ENCODE measurements at regions of chr19 and their contacts with region 1.

Region 1: GRCh38 chr19:51688672-51689571 is 4.2 kb upstream of the SPACA6 start:
- DNase-seq: no peak
- ATAC-seq: no peak
- H3K4me3 Mint-ChIP-seq: peak overlapping the region; percentile 60
- H3K27ac Mint-ChIP-seq: no peak overlapping the region
- H3K4me1 Mint-ChIP-seq: peaks cover 15% of the 10 kb centered on the region
- H3K27me3 Mint-ChIP-seq: peaks cover 9% of the 10 kb centered on the region
- CTCF ChIP-seq: no peak

Region 2: GRCh38 chr19:51621178-51621577 is 67.7 kb before region 1 on chr19:
- CTCF ChIA-PET with region 1: no interaction called
- POLR2A ChIA-PET with region 1: no interaction called
- intact Hi-C with region 1: no loop called
- DNase-seq: no peak
- ATAC-seq: no peak
- H3K4me3 Mint-ChIP-seq: no peak overlapping the region
- H3K27ac Mint-ChIP-seq: no peak overlapping the region
- H3K4me1 Mint-ChIP-seq: peaks cover 2% of the 10 kb centered on the region
- H3K27me3 Mint-ChIP-seq: peaks cover 21% of the 10 kb centered on the region
- CTCF ChIP-seq: no peak

Region 3: GRCh38 chr19:51637362-51637978 is 51.5 kb before region 1 on chr19:
- CTCF ChIA-PET with region 1: no interaction called
- POLR2A ChIA-PET with region 1: no interaction called
- intact Hi-C with region 1: no loop called
- DNase-seq: no peak
- ATAC-seq: no peak
- H3K4me3 Mint-ChIP-seq: no peak overlapping the region
- H3K27ac Mint-ChIP-seq: no peak overlapping the region
- H3K4me1 Mint-ChIP-seq: no peaks in the 10 kb centered on the region
- H3K27me3 Mint-ChIP-seq: peaks cover 26% of the 10 kb centered on the region
- CTCF ChIP-seq: peak; percentile 65

Region 4: GRCh38 chr19:51651216-51651846 is 37.6 kb before region 1 on chr19:
- CTCF ChIA-PET with region 1: no interaction called
- POLR2A ChIA-PET with region 1: no interaction called
- intact Hi-C with region 1: no loop called
- DNase-seq: no peak
- ATAC-seq: no peak
- H3K4me3 Mint-ChIP-seq: no peak overlapping the region
- H3K27ac Mint-ChIP-seq: no peak overlapping the region
- H3K4me1 Mint-ChIP-seq: no peaks in the 10 kb centered on the region
- H3K27me3 Mint-ChIP-seq: peaks cover 34% of the 10 kb centered on the region
- CTCF ChIP-seq: no peak

Region 5: GRCh38 chr19:51703575-51704515 is 14.9 kb after region 1 on chr19:
- CTCF ChIA-PET with region 1: interaction called, 4 read pairs
- POLR2A ChIA-PET with region 1: interaction called, 13 read pairs
- intact Hi-C with region 1: no loop called
- DNase-seq: peak; percentile 99
- ATAC-seq: peak; percentile 92
- H3K4me3 Mint-ChIP-seq: peak overlapping the region; percentile 90
- H3K27ac Mint-ChIP-seq: peak overlapping the region; percentile 95
- H3K4me1 Mint-ChIP-seq: peaks cover 24% of the 10 kb centered on the region
- H3K27me3 Mint-ChIP-seq: peaks cover 6% of the 10 kb centered on the region
- CTCF ChIP-seq: peak; percentile 60

Measured in activated CD8-positive, alpha-beta T cell treated with anti-CD3 and anti-CD28 coated beads for 36 hours (primary cell).